Common myeloid progenitor, CD34-positive (primary cell): ENCODE measurements at regions of chr7 and their contacts with region 1.

Region 1: DNA sequence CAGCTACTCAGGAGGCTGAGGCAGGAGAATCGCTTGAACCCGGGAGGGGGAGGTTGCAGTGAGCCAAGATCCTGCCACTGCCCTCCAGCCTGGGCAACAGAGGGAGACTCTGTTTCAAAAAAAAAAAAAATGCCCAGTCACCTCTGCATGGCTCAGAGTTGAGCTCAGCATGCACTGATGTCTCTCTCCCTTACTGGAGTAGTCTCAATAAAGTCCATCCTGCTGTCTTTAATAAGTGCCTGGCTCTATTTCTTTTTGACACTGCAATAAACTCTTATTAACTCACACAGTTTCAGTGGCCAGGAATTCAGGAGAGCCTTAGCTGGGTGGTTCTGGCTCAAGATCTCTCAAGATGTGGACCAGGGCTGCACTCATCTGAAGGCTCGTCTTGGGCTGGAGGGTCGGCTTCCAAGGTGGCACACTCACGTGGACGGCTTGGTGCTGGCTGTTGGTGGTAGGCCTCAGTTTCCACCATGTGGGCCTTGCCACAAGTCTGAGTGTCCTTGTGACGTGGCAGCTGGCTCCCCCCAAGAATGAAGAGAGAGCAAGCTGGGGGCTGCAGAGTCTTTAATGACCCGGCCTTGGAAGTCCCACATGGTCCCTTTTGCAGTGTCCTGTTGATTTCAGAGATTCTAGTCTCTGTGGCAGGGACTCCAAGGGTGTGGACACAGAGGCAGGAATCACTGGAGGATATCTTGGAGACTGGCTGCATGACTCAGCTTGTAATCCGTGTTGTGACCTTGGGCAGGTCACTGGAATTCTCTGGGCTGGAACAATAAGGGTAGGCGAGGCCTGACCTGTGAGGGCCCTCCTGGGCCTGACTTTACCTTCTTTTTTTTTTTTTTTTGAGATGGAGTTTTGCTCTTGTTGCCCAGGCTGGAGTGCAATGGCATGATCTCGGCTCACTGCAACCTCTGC is 85.9 kb upstream of the KMT2C start:
- DNase-seq: no peak
- H3K4me3 ChIP-seq: no peak overlapping the region
- H3K27ac ChIP-seq: no peak overlapping the region
- H3K4me1 ChIP-seq: peaks cover 0 to 14% (median 8%) of the 10 kb centered on the region in 4 experiments
- H3K27me3 ChIP-seq: no peaks in the 10 kb centered on the region

Region 2: GRCh38 chr7:152553671-152554317 is 32.1 kb after region 1 on chr7:
- CTCF ChIA-PET with region 1: no interaction called
- POLR2A ChIA-PET with region 1: no interaction called
- DNase-seq: peak in 1 of 3 donors; percentile 2
- H3K4me3 ChIP-seq: no peak overlapping the region
- H3K27ac ChIP-seq: no peak overlapping the region
- H3K4me1 ChIP-seq: no peaks in the 10 kb centered on the region
- H3K27me3 ChIP-seq: no peaks in the 10 kb centered on the region

Region 3: DNA sequence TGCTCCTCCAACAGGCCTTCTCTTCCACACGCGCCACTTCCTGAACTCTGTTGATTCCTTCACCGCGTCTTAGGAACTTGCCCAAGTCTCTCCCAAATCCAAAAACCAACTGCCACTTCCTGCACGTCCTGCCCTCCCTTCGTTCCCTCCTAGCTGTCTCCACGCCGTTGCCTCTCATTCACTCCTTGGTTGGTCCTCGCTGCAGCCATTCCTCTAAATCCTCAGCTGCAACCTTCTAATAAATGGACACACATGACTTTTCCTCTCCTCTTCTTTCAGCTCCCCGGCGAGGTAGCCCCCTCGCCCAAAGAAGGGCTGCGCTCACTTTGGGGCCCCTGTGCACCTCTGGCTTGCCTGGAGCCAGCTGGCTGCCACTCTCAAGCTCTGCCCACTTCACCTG is 44.1 kb after region 1 on chr7:
- CTCF ChIA-PET with region 1: no interaction called
- POLR2A ChIA-PET with region 1: interaction called, 10 read pairs
- DNase-seq: no peak
- H3K4me3 ChIP-seq: peak overlapping the region in 2 of 7 experiments; percentile 33 to 53
- H3K27ac ChIP-seq: no peak overlapping the region
- H3K4me1 ChIP-seq: peaks cover 0 to 15% (median 11%) of the 10 kb centered on the region in 4 experiments
- H3K27me3 ChIP-seq: no peaks in the 10 kb centered on the region